SK-MEL-5 (cell line): ENCODE measurements at regions of chr5 and their contacts with region 1.

Region 1: GRCh38 chr5:39599721-39600431 is 175.1 kb upstream of the DAB2 start:
- DNase-seq: peak; percentile 59

Region 2: DNA sequence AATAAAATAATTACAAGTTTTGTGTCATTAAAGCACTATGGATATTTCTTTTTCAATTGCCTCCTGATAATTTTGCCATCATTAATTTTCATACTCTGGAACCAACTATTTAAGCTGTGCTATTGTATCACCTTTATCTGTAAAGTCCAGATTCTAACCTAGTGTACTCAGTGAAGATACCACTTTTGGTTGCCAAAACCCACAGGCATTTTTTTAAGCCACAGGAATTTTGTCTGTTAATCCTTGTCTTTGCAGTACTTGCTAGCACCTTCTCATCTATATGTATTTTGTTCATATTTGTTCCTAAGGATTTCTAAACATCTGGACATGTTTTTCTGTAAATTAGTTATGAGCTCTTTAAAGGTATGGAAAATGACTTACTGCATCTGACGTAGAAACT is 306.3 kb after region 1 on chr5:
- in situ Hi-C with region 1: no loop called
- DNase-seq: no peak

Region 3: GRCh38 chr5:40191150-40191549 is 591.3 kb after region 1 on chr5:
- in situ Hi-C with region 1: no loop called
- DNase-seq: no peak

Region 4: DNA sequence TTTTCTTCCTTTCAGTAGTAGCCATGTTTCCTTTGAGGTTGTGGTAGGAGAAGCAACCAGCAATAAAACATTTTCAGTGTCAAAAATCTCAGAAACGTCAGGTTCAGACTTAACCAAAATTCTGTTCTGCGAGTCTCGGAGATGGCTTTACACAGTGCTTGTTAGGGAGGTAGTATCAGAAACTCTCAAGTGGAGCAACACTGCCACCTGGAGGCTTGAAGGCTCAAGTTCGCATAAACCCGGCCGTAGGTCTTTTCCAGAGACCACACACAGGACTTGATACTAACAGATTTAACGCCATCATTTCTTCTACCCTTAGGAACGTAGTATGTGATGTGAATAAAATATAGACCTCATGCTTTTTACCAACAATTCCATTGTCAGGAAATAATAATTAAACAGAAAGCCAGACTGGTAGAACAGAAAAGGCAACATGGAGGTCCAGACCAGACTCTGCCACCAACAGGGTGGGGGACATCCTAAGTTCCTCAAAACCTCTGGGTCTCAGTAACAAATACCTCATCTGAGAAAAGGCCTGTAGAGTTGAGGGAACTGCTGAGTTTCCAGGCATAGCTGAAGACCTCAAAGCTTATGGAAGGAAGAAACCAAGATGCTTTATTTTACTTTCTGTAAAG is 1088.4 kb after region 1 on chr5:
- in situ Hi-C with region 1: loop called (anchors 25 kb)
- DNase-seq: peak; percentile 93